ENCODE measurements at regions of chr9 and their contacts with region 1.

Region 1: DNA sequence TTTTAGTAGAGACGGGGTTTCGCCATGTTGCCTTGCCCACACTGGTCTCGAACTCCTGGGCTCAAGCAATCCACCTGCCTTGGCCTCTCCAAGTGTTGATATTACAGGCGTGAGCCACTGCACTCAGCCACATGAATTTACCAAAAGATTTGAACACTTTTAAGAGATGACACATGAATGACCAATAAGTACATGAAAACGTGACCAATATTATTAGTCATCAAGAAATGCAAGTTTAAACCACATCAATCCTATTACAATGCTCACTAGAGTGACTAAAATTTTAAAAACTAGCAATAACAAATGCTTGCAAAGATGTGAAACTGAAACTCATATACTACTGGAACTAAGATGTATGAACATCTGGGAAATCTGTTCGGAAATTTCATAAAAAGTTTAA is 54.3 kb downstream of the NR6A1 start:
- DNase-seq: no peak
- ATAC-seq: no peak
- H3K4me3 ChIP-seq: no peak overlapping the region
- H3K27ac ChIP-seq: no peak overlapping the region
- H3K4me1 ChIP-seq: peaks cover 0 to 8% (median 0%) of the 10 kb centered on the region in 3 donors
- H3K27me3 ChIP-seq: no peaks in the 10 kb centered on the region
- CTCF ChIP-seq: no peak

Region 2: GRCh38 chr9:124602204-124602603 is 114.6 kb before region 1 on chr9:
- intact Hi-C with region 1: loop called in 1 of 3 experiments (anchors 10 kb)
- DNase-seq: no peak
- ATAC-seq: peak; percentile 67 to 84 (median 74)
- H3K4me3 ChIP-seq: no peak overlapping the region
- H3K27ac ChIP-seq: no peak overlapping the region
- H3K4me1 ChIP-seq: peaks cover 0 to 9% (median 0%) of the 10 kb centered on the region in 3 donors
- H3K27me3 ChIP-seq: no peaks in the 10 kb centered on the region
- CTCF ChIP-seq: no peak

Region 3: DNA sequence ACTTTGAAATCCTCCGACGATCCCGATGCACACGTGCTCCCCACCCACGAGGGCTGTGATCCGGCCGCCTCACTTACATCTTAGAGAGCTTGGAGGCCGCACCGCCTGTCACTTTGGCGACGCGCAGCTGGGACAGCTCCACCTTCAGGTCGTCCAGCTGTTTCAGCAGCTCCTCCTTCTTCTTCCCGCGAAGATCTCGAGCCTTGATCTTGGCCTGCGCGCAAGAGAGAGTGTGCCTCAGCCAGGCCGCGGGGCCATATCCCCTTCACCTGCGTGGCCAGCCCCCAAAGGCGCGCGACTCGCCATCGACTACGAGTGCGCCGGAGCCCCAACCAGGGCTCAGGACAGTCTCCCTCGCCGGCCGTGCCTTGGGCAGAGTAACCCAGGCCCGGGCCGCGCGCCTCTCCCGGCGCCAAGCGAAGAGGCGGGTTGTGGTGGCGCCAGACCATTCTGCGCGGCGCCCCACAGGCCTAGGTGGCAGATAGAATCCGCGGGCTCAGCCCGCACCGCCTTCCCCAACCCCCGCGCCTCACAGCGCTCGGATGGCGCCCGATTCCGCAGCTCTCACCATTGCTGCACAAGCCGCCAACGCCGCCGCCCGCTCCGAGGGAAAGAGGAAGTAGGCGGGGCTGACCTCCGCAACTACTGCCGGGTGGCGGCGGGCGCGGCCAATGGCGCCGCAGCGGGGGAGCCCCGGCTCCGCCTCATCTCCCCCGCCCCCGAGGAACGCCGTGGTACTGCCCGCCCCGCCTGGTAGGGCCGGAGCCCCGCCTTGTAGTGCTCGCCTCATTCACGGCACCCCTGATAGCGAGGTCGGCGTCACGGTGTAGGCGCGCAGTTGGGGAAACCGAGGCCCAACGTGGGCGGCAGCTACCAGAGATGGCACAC is 144.8 kb after region 1 on chr9 and contains the starts of genes ARPC5L and RPL35:
- intact Hi-C with region 1: no loop called
- DNase-seq: peak; percentile 93 to 97 (median 95)
- ATAC-seq: peak; percentile 94 to 98 (median 96)
- H3K4me3 ChIP-seq: peak within 1 kb of the TSS; percentile 50 to 99 (median 82)
- H3K27ac ChIP-seq: peak within 1 kb of the TSS; percentile 75 to 87 (median 80)
- H3K4me1 ChIP-seq: peaks cover 0 to 27% (median 23%) of the 10 kb centered on the region in 3 donors
- H3K27me3 ChIP-seq: no peaks in the 10 kb centered on the region
- CTCF ChIP-seq: no peak
- total RNA-seq, gene ARPC5L: 7.0 to 14.9 (median 10.4) TPM
- total RNA-seq, gene RPL35: 711 to 1,181 (median 872) TPM